Right ventricle myocardium inferior (tissue), 1 donor: ENCODE measurements at regions of chr14 and their contacts with region 1.

Region 1: GRCh38 chr14:49862089-49862673 is 9.6 kb upstream of the NEMF start:
- DNase-seq: peak; percentile 90
- ATAC-seq: peak; percentile 67

Region 2: GRCh38 chr14:50231475-50232275 is 369.5 kb after region 1 on chr14 and contains the start of gene SOS2:
- intact Hi-C with region 1: loop called (anchors 5 kb)
- DNase-seq: peak; percentile 95
- ATAC-seq: peak; percentile 96
- total RNA-seq, gene SOS2: 35.6 TPM